ENCODE measurements at regions of chr3 and their contacts with region 1.

Region 1: DNA sequence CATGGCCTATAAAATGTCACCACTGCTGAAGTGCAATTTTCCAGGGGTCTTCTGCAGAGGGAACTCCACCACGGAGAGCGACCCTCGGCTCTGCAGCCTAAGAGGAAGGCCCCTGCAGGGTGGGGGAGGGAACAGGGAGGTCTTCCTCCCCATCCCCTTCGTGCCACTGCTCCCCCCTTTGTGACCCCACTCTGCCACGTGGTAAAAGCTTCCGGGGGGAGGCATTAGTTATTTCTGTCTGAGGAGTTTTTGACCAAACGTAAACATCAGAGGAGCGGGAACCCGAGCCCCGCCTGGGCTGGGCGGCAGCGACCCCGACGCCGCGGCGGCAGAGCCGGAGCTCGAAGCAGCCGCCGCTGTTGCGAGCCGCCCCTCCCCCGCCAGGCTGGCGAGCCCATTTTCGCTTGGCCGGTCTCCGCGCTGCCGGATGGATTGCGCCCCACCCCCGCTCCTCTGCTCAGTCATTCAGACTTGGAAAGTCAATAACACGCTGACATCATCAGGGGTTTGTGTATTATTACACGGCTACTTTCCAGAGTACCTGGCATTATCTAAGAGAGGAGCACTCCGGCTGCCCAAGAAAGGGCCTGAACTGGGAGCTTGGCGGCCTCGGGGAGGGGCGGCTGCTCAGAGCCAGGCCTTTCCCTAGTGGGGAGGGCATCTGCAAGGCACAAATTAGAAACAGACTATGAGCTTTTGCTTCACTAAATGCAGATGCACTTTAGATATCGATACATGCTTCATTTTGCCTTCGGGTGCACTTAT is 162.5 kb upstream of the TBL1XR1 start:
- DNase-seq: peak; percentile 97

Region 2: DNA sequence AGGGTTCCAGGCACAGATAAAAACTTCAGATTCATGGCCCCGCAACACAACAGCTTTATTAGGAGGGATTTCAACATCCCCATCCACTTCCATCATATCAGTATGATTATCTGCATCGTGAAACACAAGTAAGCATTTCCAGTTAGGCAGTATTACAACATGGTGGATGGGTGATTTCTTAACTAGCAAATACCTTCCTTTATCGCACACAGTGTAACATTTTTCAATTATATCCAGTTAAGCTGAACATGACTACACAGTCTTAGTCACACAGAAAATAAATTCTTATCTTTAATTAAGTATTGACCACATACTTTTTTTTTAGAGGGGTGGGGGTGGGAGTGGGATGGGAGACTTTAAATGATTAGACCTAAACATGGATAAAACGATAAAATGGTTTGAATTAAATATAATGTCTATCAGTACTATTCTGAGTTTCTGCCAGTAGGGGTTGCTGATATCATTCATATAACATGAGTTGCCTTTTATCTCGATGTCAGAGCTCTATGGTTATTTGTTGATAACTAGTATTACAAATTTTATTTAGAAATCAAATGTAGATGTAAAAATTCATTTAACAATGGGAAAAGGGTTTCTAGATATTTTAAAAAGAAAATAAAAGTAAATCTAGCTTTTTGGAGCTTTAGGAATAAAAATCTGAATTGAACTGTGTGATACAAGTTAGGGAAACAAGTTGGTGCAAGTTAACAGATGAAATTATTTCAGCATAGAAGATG is 309.1 kb before region 1 on chr3:
- intact Hi-C with region 1: loop called (anchors 5 kb)
- DNase-seq: no peak

Region 3: DNA sequence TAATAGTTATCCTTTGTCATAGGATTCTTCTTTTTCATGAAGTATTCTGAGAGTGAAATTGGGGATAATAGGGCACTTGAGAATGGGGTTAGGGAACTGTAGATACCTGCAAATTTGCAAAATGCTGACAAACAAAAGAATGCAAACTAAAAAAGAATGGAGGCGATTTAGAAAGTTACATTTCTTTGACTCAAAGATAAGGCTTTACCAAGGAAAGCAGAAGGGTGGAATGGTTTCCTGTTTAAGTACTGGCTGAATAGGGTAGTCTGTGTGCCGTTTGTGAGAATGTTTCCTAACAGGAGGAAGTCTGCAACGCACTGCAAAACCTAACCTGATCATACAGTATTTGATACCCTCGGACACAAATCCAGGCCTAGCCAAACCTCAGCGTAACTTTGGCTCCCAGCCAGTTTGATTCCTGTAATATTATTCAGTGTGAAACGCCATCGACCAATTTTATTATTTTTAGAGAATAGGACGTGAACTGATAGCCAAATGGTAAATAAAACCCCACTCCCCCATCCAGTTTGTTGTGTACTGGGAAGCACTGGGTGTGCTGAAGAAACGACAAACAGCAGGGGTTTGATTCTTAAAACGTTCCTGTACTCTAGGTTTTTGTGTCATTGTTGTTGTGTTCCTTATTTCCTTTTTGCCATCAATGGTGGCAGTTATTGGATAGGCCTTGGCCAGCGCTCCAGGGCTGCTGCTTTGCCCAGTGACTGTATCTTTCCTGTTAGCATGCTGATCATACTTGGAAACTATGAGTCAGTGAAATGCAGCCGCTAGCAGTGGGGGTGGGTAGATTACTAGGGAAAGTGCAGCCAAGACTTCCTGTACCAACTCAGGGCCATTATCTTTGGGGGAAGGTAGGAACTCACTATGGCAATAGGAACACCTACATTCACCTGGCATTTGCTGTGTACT is 14.5 kb before region 1 on chr3:
- intact Hi-C with region 1: loop called (anchors 1 kb)
- DNase-seq: peak; percentile 90

Region 4: GRCh38 chr3:177597311-177598096 is 237.7 kb after region 1 on chr3:
- intact Hi-C with region 1: loop called (anchors 5 kb)
- DNase-seq: no peak

Region 5: DNA sequence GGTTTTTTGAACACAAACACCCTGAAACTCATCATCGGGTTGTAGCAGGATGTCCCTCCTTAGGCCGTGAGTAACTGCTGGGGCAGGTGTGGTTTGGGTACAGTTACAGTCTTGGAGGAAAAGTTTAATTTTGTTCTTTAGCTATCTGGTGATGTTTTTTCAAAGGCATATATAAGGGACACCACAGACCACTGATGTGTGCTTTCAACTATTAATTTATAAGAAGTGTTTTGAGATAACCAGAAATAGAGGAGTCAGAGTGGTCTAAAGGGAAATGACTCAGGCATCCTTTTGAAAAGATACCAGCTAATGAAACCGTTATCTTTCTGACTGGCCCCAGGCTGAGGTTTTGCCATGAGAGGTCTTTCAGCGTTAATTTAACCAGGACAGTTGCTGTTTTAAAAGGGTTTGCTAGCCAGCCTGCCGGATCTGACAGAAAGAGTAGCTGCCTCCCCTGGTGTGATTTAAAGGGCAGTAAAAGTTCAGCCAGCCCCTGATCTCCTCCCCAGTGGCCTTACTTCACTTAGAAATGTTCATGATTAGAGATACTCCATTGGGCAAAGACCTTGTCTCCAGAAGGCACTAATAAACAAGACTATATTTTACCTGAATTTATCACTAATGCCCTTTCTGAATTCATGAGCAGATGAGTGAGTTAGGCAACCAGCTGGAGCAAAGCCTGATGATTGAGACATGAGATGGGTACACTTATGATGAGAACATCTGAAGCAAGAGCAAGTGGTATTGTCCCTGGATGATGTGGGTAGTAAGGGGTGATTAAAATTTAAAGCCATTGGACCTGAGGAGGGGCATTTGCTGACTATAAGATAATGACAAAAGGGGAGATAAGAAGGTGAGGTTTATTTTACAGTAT is 320.0 kb after region 1 on chr3:
- intact Hi-C with region 1: no loop called
- DNase-seq: no peak

Region 6: GRCh38 chr3:177887475-177887874 is 527.7 kb after region 1 on chr3:
- intact Hi-C with region 1: loop called (anchors 10 kb)
- DNase-seq: no peak

Measured in cardiac septum (tissue), 1 donor.